Naive thymus-derived CD4-positive, alpha-beta T cell (primary cell): ENCODE measurements at regions of chr20 and their contacts with region 1.

Region 1: GRCh38 chr20:10350188-10350842 is 83.7 kb downstream of the MKKS start:
- DNase-seq: no peak
- ATAC-seq: no peak
- H3K4me3 ChIP-seq: no peak overlapping the region
- H3K4me3 Mint-ChIP-seq: peak overlapping the region in 1 of 10 donors; percentile 48
- H3K27ac ChIP-seq: no peak overlapping the region
- H3K27ac Mint-ChIP-seq: peak overlapping the region in 3 of 9 donors; percentile 16 to 86 (median 34)
- H3K4me1 ChIP-seq: peaks cover 0 to 14% of the 10 kb centered on the region in 2 donors
- H3K4me1 Mint-ChIP-seq: peaks cover 0 to 23% (median 4%) of the 10 kb centered on the region in 7 donors
- H3K27me3 ChIP-seq: no peaks in the 10 kb centered on the region
- H3K27me3 Mint-ChIP-seq: peaks cover 0 to 2% (median 0%) of the 10 kb centered on the region in 5 donors

Region 2: GRCh38 chr20:9590189-9590588 is 760.1 kb before region 1 on chr20:
- CTCF ChIA-PET with region 1: no interaction called
- POLR2A ChIA-PET with region 1: no interaction called
- intact Hi-C with region 1: no loop called
- DNase-seq: no peak
- ATAC-seq: no peak
- H3K4me3 ChIP-seq: no peak overlapping the region
- H3K4me3 Mint-ChIP-seq: no peak overlapping the region
- H3K27ac ChIP-seq: no peak overlapping the region
- H3K27ac Mint-ChIP-seq: no peak overlapping the region
- H3K4me1 ChIP-seq: no peaks in the 10 kb centered on the region
- H3K4me1 Mint-ChIP-seq: no peaks in the 10 kb centered on the region
- H3K27me3 ChIP-seq: no peaks in the 10 kb centered on the region
- H3K27me3 Mint-ChIP-seq: peaks cover 0 to 12% (median 6%) of the 10 kb centered on the region in 5 donors

Region 3: GRCh38 chr20:10219452-10219791 is 130.9 kb before region 1 on chr20:
- CTCF ChIA-PET with region 1: no interaction called
- POLR2A ChIA-PET with region 1: no interaction called
- intact Hi-C with region 1: loop called in 1 of 2 experiments (anchors 2 kb)
- DNase-seq: peak; percentile 25 to 80 (median 51)
- ATAC-seq: peak; percentile 90
- H3K4me3 ChIP-seq: no peak overlapping the region
- H3K4me3 Mint-ChIP-seq: peak overlapping the region in 7 of 10 donors; percentile 20 to 73 (median 67)
- H3K27ac ChIP-seq: no peak overlapping the region
- H3K27ac Mint-ChIP-seq: no peak overlapping the region
- H3K4me1 ChIP-seq: no peaks in the 10 kb centered on the region
- H3K4me1 Mint-ChIP-seq: peaks cover 5 to 25% (median 16%) of the 10 kb centered on the region in 7 donors
- H3K27me3 ChIP-seq: peaks cover 0 to 4% of the 10 kb centered on the region in 2 donors
- H3K27me3 Mint-ChIP-seq: peaks cover 31 to 84% (median 65%) of the 10 kb centered on the region in 5 donors

Region 4: DNA sequence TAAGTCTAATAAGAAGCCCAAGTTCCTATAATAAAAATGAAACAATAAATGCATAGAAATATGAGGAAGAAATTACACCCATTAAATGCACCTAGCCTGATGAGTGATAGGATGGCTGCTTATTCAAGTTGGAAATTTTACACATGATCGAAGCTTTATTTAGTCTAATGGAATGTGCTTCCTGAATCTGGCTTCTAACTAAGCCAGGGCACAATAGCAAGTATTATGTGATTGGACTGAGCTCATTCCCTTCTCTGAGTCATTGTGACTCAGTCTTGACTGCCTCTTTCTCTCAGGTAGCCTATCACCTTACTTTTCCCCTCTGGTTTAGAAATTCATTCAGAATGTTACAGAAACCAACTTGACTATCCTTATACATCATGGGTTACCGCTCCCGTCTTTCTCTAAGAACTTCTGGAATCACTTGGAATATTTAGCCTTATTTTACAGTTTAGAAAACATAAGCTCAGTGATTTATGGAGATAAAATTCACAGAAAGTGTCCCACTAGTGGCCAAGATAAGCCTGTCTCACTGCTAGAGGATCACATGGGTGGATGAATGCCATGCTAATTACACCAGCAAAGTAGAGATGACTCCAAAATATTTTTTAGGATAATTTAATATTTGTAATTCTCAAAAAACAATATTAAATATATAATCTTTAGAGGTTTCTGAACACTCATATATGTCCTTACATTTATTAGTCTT is 828.8 kb after region 1 on chr20:
- CTCF ChIA-PET with region 1: no interaction called
- POLR2A ChIA-PET with region 1: no interaction called
- intact Hi-C with region 1: no loop called
- DNase-seq: no peak
- ATAC-seq: no peak
- H3K4me3 ChIP-seq: no peak overlapping the region
- H3K4me3 Mint-ChIP-seq: no peak overlapping the region
- H3K27ac ChIP-seq: no peak overlapping the region
- H3K27ac Mint-ChIP-seq: no peak overlapping the region
- H3K4me1 ChIP-seq: no peaks in the 10 kb centered on the region
- H3K4me1 Mint-ChIP-seq: peaks cover 0 to 3% (median 0%) of the 10 kb centered on the region in 7 donors
- H3K27me3 ChIP-seq: no peaks in the 10 kb centered on the region
- H3K27me3 Mint-ChIP-seq: no peaks in the 10 kb centered on the region